Heart left ventricle (tissue), 16 donors: ENCODE measurements at regions of chr2 and their contacts with region 1.

Region 1: GRCh38 chr2:176554101-176555048 is 285.1 kb downstream of the MTX2 start:
- DNase-seq: peak in 3 of 5 donors; percentile 24 to 32 (median 26)
- ATAC-seq: peak; percentile 25 to 75 (median 66)
- H3K4me3 ChIP-seq: peak overlapping the region in 11 of 12 donors; percentile 28 to 65 (median 52)
- H3K27ac ChIP-seq: peak overlapping the region; percentile 2 to 79 (median 68)
- H3K4me1 ChIP-seq: peaks cover 0 to 22% (median 5%) of the 10 kb centered on the region in 12 donors
- H3K27me3 ChIP-seq: peaks cover 0 to 37% (median 13%) of the 10 kb centered on the region in 9 donors
- CTCF ChIP-seq: peak; percentile 67 to 87 (median 78)
- POLR2A ChIP-seq: no peak

Region 2: GRCh38 chr2:176140513-176141317 is 413.7 kb before region 1 on chr2:
- intact Hi-C with region 1: loop called (anchors 1 to 2 kb)
- DNase-seq: peak; percentile 64 to 85 (median 70)
- ATAC-seq: peak; percentile 80 to 97 (median 94)
- H3K4me3 ChIP-seq: peak overlapping the region; percentile 1 to 69 (median 52)
- H3K27ac ChIP-seq: peak overlapping the region in 5 of 12 donors; percentile 32 to 68 (median 56)
- H3K4me1 ChIP-seq: peaks cover 0 to 30% (median 14%) of the 10 kb centered on the region in 12 donors
- H3K27me3 ChIP-seq: peaks cover 31 to 97% (median 66%) of the 10 kb centered on the region in 9 donors
- CTCF ChIP-seq: peak; percentile 68 to 98 (median 92)
- POLR2A ChIP-seq: no peak

Region 3: GRCh38 chr2:176461809-176462382 is 92.5 kb before region 1 on chr2:
- intact Hi-C with region 1: loop called in 5 of 10 experiments (anchors 2 to 5 kb)
- DNase-seq: no peak
- ATAC-seq: no peak
- H3K4me3 ChIP-seq: no peak overlapping the region
- H3K27ac ChIP-seq: peak overlapping the region in 6 of 12 donors; percentile 7 to 26 (median 21)
- H3K4me1 ChIP-seq: peaks cover 0 to 19% (median 3%) of the 10 kb centered on the region in 12 donors
- H3K27me3 ChIP-seq: peaks cover 0 to 27% (median 8%) of the 10 kb centered on the region in 9 donors
- CTCF ChIP-seq: no peak
- POLR2A ChIP-seq: no peak

Region 4: GRCh38 chr2:176638167-176639015 is 84.0 kb after region 1 on chr2:
- intact Hi-C with region 1: loop called in 7 of 10 experiments (anchors 5 to 10 kb)
- DNase-seq: peak; percentile 48 to 74 (median 69)
- ATAC-seq: peak in 3 of 4 donors; percentile 79 to 95 (median 88)
- H3K4me3 ChIP-seq: peak overlapping the region; percentile 49 to 77 (median 60)
- H3K27ac ChIP-seq: peak overlapping the region in 6 of 12 donors; percentile 37 to 77 (median 58)
- H3K4me1 ChIP-seq: peaks cover 0 to 10% (median 4%) of the 10 kb centered on the region in 12 donors
- H3K27me3 ChIP-seq: peaks cover 10 to 96% (median 54%) of the 10 kb centered on the region in 9 donors
- CTCF ChIP-seq: peak; percentile 57 to 88 (median 78)
- POLR2A ChIP-seq: no peak

Region 5: DNA sequence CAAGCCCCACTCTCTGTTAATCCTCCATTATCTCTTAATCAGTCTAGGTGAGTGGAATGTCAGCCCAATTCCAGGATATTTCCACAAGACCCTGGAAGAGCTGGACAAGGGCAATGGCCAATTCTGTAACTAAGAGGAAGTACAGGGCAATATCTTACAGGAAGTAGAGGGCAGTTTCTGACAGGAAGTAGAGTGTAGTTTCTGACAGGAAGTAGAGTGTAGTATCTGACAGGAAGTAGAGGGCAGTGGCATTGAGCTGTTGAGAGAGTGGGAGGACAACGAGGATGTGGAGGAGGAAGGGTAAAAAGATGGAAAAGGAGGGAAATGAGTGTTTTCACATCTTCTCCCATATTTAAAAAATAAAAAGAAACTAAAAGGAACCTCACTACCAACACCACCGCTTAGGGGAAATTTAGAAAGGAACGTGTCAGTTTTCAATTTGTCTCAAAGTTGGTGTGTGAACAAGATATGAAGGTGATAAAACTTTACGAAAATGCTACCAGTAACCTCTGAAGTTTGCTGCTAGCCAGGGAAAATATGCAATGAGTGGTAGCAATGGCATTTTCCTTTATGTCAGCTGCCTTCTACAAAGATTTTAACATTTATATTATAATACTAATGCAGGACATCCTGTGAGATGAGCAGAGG is 227.3 kb after region 1 on chr2:
- intact Hi-C with region 1: no loop called
- DNase-seq: no peak
- ATAC-seq: no peak
- H3K4me3 ChIP-seq: no peak overlapping the region
- H3K27ac ChIP-seq: no peak overlapping the region
- H3K4me1 ChIP-seq: peaks cover 0 to 15% (median 0%) of the 10 kb centered on the region in 12 donors
- H3K27me3 ChIP-seq: no peaks in the 10 kb centered on the region
- CTCF ChIP-seq: no peak
- POLR2A ChIP-seq: no peak